Prostate gland (tissue), 2 donors: ENCODE measurements at regions of chr9 and their contacts with region 1.

Region 1: GRCh38 chr9:21334701-21335632 is at the start of gene KLHL9:
- DNase-seq: peak; percentile 91
- H3K4me3 ChIP-seq: peak within 1 kb of the TSS; percentile 74 to 79
- H3K27ac ChIP-seq: peak within 1 kb of the TSS; percentile 95 to 96
- H3K4me1 ChIP-seq: peaks cover 8% of the 10 kb centered on the region
- H3K27me3 ChIP-seq: no peaks in the 10 kb centered on the region
- CTCF ChIP-seq: no peak
- POLR2A ChIP-seq: peak; percentile 62
- total RNA-seq, gene KLHL9: 21.4 to 31.4 TPM

Region 2: DNA sequence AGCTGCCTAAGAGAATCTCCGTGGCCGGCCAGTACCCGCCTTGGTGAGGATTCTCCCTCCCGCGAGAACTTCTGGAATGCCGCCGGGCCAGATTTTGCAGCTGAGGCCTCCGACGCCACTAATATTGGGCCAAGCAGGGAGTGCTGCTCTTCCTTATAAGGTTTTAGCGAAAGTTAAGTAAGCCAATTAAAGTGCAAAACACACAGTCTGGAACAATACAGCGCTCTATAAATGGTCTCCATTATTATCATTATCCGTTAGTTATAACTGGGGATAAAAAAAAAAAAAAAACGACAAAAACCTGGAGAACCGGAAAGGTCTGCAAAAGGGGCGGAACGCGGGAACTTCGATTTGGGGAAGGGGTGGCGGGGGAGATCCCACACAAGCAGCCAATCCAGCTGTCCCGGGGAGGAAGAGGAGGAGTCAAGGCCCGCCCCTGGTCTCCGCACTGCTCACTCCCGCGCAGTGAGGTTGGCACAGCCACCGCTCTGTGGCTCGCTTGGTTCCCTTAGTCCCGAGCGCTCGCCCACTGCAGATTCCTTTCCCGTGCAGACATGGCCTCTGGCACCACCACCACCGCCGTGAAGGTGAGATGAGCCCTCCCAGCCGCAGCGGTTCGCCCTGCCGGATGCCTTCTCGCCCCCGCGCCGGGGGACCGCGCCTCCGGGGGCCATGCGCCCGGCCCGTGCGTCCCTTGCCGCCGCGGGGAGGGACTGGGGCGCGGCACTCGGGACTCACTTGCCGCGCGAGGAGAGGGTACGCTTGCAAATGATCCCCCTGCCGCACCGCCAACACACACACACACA is 467.4 kb after region 1 on chr9 and contains the start of gene MTAP:
- intact Hi-C with region 1: loop called (anchors 5 kb)
- DNase-seq: peak; percentile 95
- H3K4me3 ChIP-seq: peak within 1 kb of the TSS; percentile 69 to 73
- H3K27ac ChIP-seq: peak within 1 kb of the TSS; percentile 87 to 92
- H3K4me1 ChIP-seq: no peaks in the 10 kb centered on the region
- H3K27me3 ChIP-seq: no peaks in the 10 kb centered on the region
- CTCF ChIP-seq: peak in 1 of 4 experiments; percentile 13
- POLR2A ChIP-seq: peak; percentile 80
- total RNA-seq, gene MTAP: 13.3 to 33.5 TPM

Region 3: DNA sequence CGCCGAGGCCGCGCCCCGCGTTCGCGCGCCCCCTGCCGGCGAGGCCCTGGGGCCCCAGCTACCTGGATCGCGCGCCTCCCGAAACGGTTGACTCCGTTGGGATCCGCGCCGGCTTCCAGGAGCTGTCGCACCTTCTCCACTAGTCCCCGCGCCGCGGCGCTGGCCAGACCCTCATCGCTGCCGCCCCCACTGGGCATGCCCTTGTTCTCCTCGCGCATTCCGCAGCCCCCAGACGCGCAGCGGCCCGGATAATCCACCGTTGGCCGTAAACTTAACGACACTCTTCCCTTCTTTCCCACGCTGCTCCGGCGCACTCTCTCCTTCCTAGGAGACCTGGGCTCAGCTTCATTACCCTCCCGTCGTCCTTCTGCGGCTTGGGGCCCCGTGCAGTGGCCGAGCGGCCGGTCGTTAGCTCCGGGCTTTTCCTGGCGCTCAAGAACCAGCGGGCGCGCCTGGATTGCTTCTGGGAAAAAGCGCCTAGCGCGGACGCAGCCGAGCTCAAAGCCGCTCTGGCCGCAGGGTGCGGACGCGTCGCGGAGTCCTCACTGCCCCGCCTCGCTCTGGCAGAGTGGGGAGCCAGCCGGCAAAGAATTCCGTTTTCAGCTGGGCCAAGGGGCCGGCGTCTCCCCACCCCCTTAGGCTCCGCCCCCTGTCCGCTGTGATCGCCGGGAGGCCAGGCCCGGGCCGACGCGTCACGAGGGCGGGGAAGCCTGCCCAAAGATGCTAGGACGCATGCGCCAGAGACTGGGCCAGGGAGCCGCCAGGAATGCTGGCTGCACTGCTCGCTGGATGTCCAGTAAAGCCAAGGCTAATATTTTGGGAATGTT is 674.0 kb after region 1 on chr9 and contains the start of gene CDKN2B:
- intact Hi-C with region 1: loop called (anchors 10 kb)
- DNase-seq: peak; percentile 94
- H3K4me3 ChIP-seq: peak within 1 kb of the TSS; percentile 49 to 66
- H3K27ac ChIP-seq: peak within 1 kb of the TSS; percentile 89 to 92
- H3K4me1 ChIP-seq: no peaks in the 10 kb centered on the region
- H3K27me3 ChIP-seq: peaks cover 8% of the 10 kb centered on the region
- CTCF ChIP-seq: peak; percentile 73 to 91 (median 86)
- POLR2A ChIP-seq: peak; percentile 61
- total RNA-seq, gene CDKN2B: 5.4 to 8.8 TPM